HAP-1 (cell line): ENCODE measurements at regions of chr2 and their contacts with region 1.

Region 1: GRCh38 chr2:156334496-156335478 is 2.3 kb upstream of the NR4A2 start:
- DNase-seq: peak; percentile 83 to 89
- H3K4me3 ChIP-seq: peak overlapping the region; percentile 81
- H3K4me1 ChIP-seq: peaks cover 49% of the 10 kb centered on the region
- H3K27me3 ChIP-seq: no peaks in the 10 kb centered on the region

Region 2: DNA sequence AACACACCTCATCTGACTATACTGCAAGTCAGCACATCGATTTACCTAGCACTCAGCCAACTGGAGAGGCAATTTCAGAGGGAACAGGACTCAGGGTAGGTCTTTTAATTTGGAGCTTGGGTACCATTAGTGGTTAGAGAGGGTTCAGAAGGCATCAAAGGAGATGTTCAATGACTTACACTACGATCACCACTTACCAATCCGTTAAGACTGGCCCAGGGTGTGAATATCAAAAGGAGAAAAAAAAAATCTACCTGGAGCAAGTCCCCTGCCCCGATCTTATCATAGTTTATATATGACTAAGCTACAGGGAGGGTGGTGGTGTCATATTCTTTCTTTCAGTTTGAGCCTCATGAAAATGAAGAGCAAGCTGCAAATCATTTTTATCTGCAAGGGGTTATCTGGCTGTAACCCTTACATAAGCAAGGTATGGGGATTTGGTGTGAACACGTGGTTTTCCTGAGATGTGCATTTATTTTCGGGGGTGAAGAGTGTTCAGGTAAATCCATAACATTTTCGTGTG is 65.0 kb after region 1 on chr2:
- in situ Hi-C with region 1: loop called (anchors 5 kb)
- DNase-seq: no peak
- H3K4me3 ChIP-seq: peak overlapping the region; percentile 44
- H3K4me1 ChIP-seq: peaks cover 5% of the 10 kb centered on the region
- H3K27me3 ChIP-seq: no peaks in the 10 kb centered on the region